MCF 10A (cell line): ENCODE measurements at regions of chr7 and their contacts with region 1.

Region 1: DNA sequence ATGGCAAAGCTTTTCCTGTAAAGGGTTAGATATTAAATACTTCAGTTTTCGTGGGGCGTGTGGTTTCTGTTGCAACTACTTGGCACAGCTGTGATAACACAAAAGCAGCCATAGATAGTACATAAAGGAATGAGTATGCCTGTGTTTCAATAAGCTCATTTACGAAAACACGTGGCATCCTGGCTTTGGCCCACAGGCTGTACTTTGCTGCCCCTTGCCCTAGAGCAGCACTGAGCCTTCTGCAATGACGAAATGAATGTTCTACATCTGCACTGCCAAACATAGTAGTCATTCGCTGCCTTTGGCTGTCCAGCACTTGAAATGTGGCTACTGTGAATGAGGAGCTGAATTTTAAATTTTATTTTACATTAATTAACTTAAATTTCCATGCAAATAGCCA is 376.2 kb upstream of the TPK1 start:
- DNase-seq: peak; percentile 91
- H3K4me3 Mint-ChIP-seq: no peak overlapping the region
- H3K27ac Mint-ChIP-seq: peak overlapping the region; percentile 49
- H3K4me1 Mint-ChIP-seq: peaks cover 32% of the 10 kb centered on the region
- H3K27me3 Mint-ChIP-seq: no peaks in the 10 kb centered on the region
- CTCF ChIP-seq: no peak

Region 2: DNA sequence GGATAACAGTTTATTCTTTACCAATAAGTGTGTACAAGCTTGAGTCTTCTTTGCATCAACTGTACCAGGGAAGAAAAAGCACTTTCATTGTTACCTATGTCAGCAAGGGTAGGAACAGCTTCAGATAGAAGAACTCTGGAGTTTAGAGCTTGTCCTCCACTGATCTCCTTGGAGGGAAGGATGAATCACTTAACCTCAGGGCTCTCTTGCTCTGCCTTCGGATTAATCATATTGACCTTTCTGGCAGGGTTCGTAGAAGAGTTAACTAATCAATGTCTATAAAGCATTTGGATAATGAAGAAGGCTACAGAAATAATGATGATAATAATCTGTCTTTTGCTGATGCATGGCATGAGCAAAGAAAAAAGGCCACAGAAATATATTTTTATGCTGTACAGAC is 36.7 kb before region 1 on chr7:
- CTCF ChIA-PET with region 1: interaction called, 4 read pairs
- POLR2A ChIA-PET with region 1: interaction called, 10 read pairs
- intact Hi-C with region 1: no loop called
- DNase-seq: peak; percentile 38
- H3K4me3 Mint-ChIP-seq: no peak overlapping the region
- H3K27ac Mint-ChIP-seq: no peak overlapping the region
- H3K4me1 Mint-ChIP-seq: peaks cover 20% of the 10 kb centered on the region
- H3K27me3 Mint-ChIP-seq: no peaks in the 10 kb centered on the region
- CTCF ChIP-seq: no peak

Region 3: GRCh38 chr7:145360511-145361100 is 148.6 kb after region 1 on chr7:
- CTCF ChIA-PET with region 1: no interaction called
- POLR2A ChIA-PET with region 1: no interaction called
- intact Hi-C with region 1: no loop called
- DNase-seq: no peak
- H3K4me3 Mint-ChIP-seq: no peak overlapping the region
- H3K27ac Mint-ChIP-seq: no peak overlapping the region
- H3K4me1 Mint-ChIP-seq: no peaks in the 10 kb centered on the region
- H3K27me3 Mint-ChIP-seq: no peaks in the 10 kb centered on the region
- CTCF ChIP-seq: no peak

Region 4: GRCh38 chr7:145398758-145399157 is 186.7 kb after region 1 on chr7:
- CTCF ChIA-PET with region 1: no interaction called
- POLR2A ChIA-PET with region 1: no interaction called
- intact Hi-C with region 1: no loop called
- DNase-seq: peak; percentile 83
- H3K4me3 Mint-ChIP-seq: peak overlapping the region; percentile 48
- H3K27ac Mint-ChIP-seq: peak overlapping the region; percentile 66
- H3K4me1 Mint-ChIP-seq: peaks cover 39% of the 10 kb centered on the region
- H3K27me3 Mint-ChIP-seq: no peaks in the 10 kb centered on the region
- CTCF ChIP-seq: no peak